ENCODE measurements at regions of chr6 and their contacts with region 1.

Region 1: DNA sequence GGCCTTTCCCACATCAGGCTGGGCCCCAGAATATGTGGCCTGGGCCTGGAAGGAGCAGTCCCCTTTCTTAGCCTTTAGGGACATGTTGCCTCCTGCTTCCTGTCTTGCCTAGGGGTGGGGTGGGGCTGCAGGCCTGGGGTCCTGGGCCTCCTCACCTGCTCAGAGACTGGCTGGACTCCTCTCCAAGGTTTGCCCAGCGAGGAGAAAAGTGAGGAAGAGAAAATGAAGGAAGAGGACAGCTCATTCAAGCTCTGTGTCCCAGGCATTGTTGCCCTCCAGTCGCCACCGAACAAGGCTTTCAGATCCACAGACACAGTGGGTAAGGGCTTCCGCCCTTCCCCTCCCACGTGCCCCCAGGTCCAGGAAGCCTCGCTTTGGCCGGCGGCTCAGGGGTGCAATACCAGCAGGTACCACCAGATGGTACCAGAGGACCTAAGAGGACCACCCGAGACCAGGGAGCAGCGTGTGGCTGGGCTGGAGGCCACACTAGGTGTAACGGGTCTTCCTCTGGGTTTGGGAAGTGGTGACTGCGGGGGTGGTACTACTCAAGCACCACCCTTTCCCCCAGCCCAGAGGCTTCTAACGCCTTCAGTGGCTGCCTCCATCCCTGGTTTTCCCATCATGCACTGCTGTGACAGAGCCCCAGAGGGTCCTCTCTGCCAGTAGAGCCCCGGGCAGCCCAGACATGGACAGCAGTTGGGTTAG is 5.5 kb upstream of the BAK1 start:
- DNase-seq: peak; percentile 73 to 96 (median 90)
- ATAC-seq: peak; percentile 97
- H3K4me3 ChIP-seq: peak overlapping the region; percentile 1 to 8
- H3K4me3 Mint-ChIP-seq: peak overlapping the region; percentile 39
- H3K27ac ChIP-seq: peak overlapping the region in 1 of 2 experiments; percentile 57
- H3K27ac Mint-ChIP-seq: peak overlapping the region; percentile 91
- H3K4me1 ChIP-seq: peaks cover 19% of the 10 kb centered on the region
- H3K4me1 Mint-ChIP-seq: peaks cover 17% of the 10 kb centered on the region
- H3K27me3 ChIP-seq: no peaks in the 10 kb centered on the region
- H3K27me3 Mint-ChIP-seq: no peaks in the 10 kb centered on the region
- CTCF ChIP-seq: peak; percentile 92

Region 2: GRCh38 chr6:33607784-33608161 is 22.2 kb after region 1 on chr6:
- CTCF ChIA-PET with region 1: interaction called, 17 read pairs
- POLR2A ChIA-PET with region 1: no interaction called
- intact Hi-C with region 1: no loop called
- DNase-seq: peak in 2 of 9 experiments; percentile 52 to 59
- ATAC-seq: no peak
- H3K4me3 ChIP-seq: no peak overlapping the region
- H3K4me3 Mint-ChIP-seq: no peak overlapping the region
- H3K27ac ChIP-seq: no peak overlapping the region
- H3K27ac Mint-ChIP-seq: no peak overlapping the region
- H3K4me1 ChIP-seq: no peaks in the 10 kb centered on the region
- H3K4me1 Mint-ChIP-seq: peaks cover 1% of the 10 kb centered on the region
- H3K27me3 ChIP-seq: no peaks in the 10 kb centered on the region
- H3K27me3 Mint-ChIP-seq: peaks cover 4% of the 10 kb centered on the region
- CTCF ChIP-seq: no peak

Region 3: DNA sequence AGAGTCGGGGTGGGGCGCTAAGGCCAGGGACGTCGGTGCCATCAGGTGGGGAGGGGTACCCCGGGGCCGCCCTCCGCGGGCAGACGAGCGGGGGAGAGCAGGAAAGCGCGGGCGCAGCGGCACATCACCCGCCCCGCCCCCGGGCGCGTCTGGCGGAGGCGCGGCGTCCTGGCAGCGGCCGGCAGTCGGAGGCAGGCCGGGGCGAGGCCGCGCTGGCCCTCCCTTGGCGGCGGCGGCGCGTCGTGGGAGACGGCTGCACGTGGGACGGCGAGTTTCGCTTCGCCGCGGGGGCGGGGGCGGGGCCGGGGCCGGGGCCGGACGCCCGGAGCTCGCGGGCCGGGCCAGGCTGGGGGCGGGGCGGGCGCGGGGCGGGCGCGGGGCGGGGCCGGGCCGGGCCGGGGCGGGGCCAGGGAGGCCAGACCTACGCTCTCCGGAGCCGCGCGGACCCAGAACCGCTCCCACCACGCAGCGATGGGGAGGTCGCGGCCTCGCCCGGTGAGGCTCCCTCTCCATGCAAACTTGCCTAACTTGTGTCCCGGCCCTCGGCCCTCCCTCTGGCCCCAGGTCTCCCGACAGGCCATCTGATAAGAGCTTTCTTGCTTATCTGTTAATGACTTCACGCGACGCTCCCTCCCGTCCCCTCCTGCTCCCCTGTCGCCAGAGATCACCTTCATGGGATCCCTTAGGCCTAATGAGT is 48.1 kb after region 1 on chr6:
- CTCF ChIA-PET with region 1: interaction called, 32 read pairs
- POLR2A ChIA-PET with region 1: no interaction called
- intact Hi-C with region 1: loop called (anchors 1 kb)
- DNase-seq: peak in 8 of 9 experiments; percentile 38 to 85 (median 53)
- ATAC-seq: peak; percentile 77
- H3K4me3 ChIP-seq: peak overlapping the region; percentile 48 to 54
- H3K4me3 Mint-ChIP-seq: peak overlapping the region; percentile 85
- H3K27ac ChIP-seq: peak overlapping the region in 1 of 2 experiments; percentile 19
- H3K27ac Mint-ChIP-seq: no peak overlapping the region
- H3K4me1 ChIP-seq: peaks cover 21% of the 10 kb centered on the region
- H3K4me1 Mint-ChIP-seq: peaks cover 55% of the 10 kb centered on the region
- H3K27me3 ChIP-seq: no peaks in the 10 kb centered on the region
- H3K27me3 Mint-ChIP-seq: no peaks in the 10 kb centered on the region
- CTCF ChIP-seq: no peak

Region 4: DNA sequence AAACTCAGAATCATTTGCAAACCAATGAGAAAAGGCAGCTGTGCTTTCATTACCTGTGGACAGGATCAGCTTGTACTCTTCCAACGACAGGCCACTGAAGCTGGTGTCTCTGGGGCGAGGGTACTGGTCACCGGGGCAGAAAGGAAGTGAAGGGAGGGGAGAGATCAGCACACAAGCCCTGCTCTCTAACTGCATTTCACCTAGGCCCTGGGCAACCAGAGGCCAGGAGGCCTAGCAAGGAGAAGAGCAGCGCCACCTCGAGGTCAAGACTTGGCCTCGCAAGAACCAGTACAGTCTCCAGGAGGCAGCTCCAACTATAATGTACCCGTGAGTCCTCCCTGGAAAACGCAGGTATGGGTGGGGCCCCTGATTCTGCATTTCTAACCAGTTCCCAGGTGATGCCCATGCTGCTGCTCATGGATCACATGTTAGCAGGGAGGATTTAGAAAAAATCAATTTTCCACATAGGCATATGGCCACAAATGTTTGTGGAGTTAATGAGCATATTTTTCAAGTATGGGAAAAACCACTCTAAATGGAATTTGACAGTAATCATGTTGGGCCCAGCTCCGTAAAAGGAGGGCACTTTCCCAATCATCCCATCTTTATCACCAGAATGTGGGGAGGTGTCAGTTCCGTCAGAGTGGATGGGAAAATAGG is 115.0 kb after region 1 on chr6:
- CTCF ChIA-PET with region 1: interaction called, 106 read pairs
- POLR2A ChIA-PET with region 1: interaction called, 3 read pairs
- intact Hi-C with region 1: loop called (anchors 1 kb)
- DNase-seq: peak; percentile 46 to 84 (median 78)
- ATAC-seq: peak; percentile 71
- H3K4me3 ChIP-seq: no peak overlapping the region
- H3K4me3 Mint-ChIP-seq: no peak overlapping the region
- H3K27ac ChIP-seq: peak overlapping the region in 1 of 2 experiments; percentile 48
- H3K27ac Mint-ChIP-seq: peak overlapping the region; percentile 60
- H3K4me1 ChIP-seq: peaks cover 31% of the 10 kb centered on the region
- H3K4me1 Mint-ChIP-seq: peaks cover 35% of the 10 kb centered on the region
- H3K27me3 ChIP-seq: no peaks in the 10 kb centered on the region
- H3K27me3 Mint-ChIP-seq: no peaks in the 10 kb centered on the region
- CTCF ChIP-seq: peak; percentile 63

Region 5: DNA sequence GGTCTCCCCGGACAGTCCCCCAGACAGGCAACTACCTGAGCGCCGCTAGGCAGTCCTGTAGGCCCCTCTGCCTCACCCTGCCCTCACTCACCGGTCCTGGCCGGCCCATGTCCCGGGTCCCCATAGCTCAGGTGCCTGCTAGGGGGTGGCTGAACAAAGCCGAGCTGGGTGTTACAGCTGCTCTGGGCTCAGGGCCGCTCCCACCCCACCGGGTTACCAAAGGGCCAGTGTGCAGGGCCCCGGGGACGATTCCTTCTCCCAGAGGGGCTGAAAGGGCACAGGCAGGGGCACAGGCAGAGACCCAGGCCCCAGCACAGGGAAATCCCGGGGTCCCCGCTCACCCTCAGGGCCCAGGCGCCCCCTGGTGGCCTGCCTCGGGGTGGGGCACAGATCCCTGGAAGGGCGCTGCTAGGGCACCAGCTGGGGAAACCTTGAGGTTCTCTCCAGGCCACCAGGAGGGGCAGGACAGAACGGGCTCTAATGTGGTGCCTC is 441.9 kb after region 1 on chr6:
- CTCF ChIA-PET with region 1: interaction called, 3 read pairs
- POLR2A ChIA-PET with region 1: no interaction called
- intact Hi-C with region 1: loop called in 1 of 2 experiments (anchors 1 kb)
- DNase-seq: peak; percentile 29 to 84 (median 64)
- ATAC-seq: peak; percentile 66
- H3K4me3 ChIP-seq: no peak overlapping the region
- H3K4me3 Mint-ChIP-seq: no peak overlapping the region
- H3K27ac ChIP-seq: no peak overlapping the region
- H3K27ac Mint-ChIP-seq: no peak overlapping the region
- H3K4me1 ChIP-seq: no peaks in the 10 kb centered on the region
- H3K4me1 Mint-ChIP-seq: no peaks in the 10 kb centered on the region
- H3K27me3 ChIP-seq: no peaks in the 10 kb centered on the region
- H3K27me3 Mint-ChIP-seq: peaks cover 5% of the 10 kb centered on the region
- CTCF ChIP-seq: peak; percentile 82